Activated CD4-positive, alpha-beta memory T cell treated with anti-CD3 and anti-CD28 coated beads for 36 hours (primary cell): ENCODE measurements at regions of chr9 and their contacts with region 1.

Region 1: GRCh38 chr9:128026773-128027541 is 40.2 kb downstream of the NAIF1 start:
- DNase-seq: peak; percentile 75
- H3K4me3 Mint-ChIP-seq: peak overlapping the region; percentile 66
- H3K27ac Mint-ChIP-seq: peak overlapping the region; percentile 93
- H3K4me1 Mint-ChIP-seq: peaks cover 89% of the 10 kb centered on the region
- H3K27me3 Mint-ChIP-seq: peaks cover 2% of the 10 kb centered on the region

Region 2: GRCh38 chr9:127779136-127779981 is 247.6 kb before region 1 on chr9:
- CTCF ChIA-PET with region 1: no interaction called
- POLR2A ChIA-PET with region 1: no interaction called
- intact Hi-C with region 1: loop called (anchors 2 kb)
- DNase-seq: peak; percentile 85
- H3K4me3 Mint-ChIP-seq: peak overlapping the region; percentile 99
- H3K27ac Mint-ChIP-seq: peak overlapping the region; percentile 98
- H3K4me1 Mint-ChIP-seq: peaks cover 59% of the 10 kb centered on the region
- H3K27me3 Mint-ChIP-seq: no peaks in the 10 kb centered on the region

Region 3: DNA sequence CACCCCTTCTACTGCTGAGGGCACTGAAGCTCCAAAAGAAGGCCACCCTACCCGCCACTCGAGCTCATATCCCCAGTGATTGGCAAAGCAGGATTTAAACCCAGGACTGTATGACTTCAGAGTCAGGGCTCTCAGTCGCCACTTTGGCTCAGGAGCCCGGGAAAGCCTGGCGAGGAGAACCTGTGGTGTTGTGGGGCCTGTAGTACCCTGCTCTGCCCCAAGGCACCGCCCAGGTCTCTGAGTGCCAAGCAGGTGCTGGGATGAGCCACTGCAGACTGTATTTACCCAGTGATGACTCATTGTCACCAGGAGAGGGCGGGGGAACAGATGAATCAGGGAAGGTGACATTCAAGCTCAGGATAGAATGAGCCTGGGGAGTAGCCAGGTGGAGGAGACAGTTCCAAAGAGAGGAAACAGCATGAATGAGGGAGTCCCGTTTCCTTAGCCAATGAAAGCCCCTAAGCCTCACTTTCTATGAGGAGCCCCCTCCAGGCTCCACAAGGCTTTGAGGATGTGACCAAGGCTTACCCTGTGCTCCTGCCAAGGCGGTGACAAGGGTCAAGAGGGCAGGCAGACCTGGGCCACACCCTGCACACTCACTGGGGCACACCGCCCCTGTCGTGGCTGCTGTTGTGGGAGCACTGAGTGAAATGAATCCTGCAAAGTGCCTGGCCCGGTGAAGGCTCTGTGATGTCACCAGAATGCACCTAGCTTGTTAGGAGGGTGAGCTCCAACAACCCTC is 71.5 kb before region 1 on chr9:
- CTCF ChIA-PET with region 1: interaction called, 27 read pairs
- POLR2A ChIA-PET with region 1: interaction called, 4 read pairs
- intact Hi-C with region 1: loop called (anchors 1 kb)
- DNase-seq: peak; percentile 95
- H3K4me3 Mint-ChIP-seq: peak overlapping the region; percentile 30
- H3K27ac Mint-ChIP-seq: peak overlapping the region; percentile 92
- H3K4me1 Mint-ChIP-seq: peaks cover 80% of the 10 kb centered on the region
- H3K27me3 Mint-ChIP-seq: no peaks in the 10 kb centered on the region

Region 4: DNA sequence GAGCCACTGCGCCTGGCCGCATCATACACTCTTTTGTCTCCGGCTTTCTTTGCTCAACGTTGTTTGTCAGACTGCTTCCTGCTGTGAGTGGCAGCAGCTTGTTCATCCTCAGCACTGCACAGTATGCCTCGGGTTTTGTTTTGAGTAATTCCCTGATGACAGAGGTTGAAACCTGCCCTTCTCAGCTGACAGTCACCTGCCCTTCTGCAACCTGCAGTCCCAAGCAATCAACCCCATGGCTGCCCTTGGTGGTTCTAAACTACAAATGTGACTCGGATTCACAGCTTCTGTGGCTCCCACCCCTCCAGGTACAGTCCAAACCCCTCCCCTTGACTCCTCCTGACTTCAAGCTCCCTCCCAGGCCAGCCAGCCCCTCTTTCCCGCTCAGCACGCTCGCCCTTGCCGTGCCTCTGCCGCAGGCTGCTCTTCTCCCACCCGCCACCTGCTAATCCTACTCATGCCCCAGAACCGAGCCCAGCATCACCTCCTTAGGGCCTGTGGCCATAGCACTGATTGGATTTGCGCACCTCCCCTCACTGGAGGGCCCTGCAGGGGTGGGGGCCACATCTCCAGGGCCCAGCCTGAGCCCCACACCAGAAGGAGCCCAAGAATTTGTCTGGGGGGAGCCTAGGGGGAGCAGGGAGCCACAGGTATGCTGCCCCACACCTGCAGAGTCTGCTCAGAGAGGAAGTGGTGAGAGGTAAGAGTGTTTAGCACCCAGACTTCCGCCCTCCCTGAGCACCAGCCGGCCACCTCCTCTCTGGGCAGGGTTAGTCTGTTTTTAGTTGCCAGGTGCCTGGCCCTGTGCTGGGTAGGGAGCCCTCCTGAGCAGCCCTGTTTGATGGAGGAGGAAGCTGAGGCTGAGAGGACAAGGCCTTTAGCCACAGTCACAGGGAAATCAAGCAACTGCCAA is 56.3 kb before region 1 on chr9:
- CTCF ChIA-PET with region 1: interaction called, 4 read pairs
- POLR2A ChIA-PET with region 1: interaction called, 45 read pairs
- intact Hi-C with region 1: loop called (anchors 1 kb)
- DNase-seq: peak; percentile 89
- H3K4me3 Mint-ChIP-seq: peak overlapping the region; percentile 62
- H3K27ac Mint-ChIP-seq: peak overlapping the region; percentile 88
- H3K4me1 Mint-ChIP-seq: peaks cover 97% of the 10 kb centered on the region
- H3K27me3 Mint-ChIP-seq: no peaks in the 10 kb centered on the region

Region 5: DNA sequence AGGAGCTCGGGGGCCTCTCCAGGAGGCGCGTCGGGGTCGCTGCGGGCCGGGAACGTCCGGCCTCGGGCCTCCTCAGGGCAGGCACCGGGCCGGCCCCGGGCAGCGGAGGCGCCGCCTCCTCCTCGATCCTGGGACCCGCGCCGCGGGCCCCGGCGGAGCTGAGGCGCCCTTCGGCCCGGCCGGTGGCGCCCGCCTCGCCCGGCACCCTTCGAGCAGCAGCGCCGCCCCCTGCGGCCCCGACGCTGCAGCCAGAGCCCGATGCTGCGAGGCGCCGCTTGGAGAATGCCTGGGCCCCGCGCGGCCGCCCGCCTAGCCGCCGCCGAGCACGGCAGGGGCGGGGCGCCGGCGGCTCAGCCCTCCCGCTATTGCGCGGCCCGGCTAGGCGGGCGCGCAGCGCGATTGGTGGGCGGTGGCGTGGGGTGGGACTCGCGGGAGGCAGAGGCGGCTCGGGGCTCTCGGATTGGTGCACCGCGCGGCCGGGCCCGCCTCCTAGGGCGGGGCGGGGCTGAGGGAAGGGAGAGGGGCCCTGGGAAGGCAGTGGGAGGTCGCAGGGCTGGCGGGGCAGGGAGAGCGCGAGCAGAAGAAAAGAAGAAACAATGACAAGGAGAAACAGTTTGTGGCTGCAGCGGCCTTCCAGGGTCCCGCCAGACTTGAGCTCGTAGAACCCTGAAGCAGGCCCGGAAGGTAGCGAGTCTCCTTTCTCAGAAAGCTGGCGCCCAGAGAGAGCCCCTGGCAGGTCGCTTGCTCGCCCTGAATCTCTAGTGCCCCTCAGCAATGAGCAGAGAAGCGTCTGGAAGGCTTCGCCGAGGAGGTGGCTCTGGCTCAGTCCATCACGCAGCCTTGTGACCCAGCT is 46.0 kb before region 1 on chr9 and contains the start of gene EEIG1:
- CTCF ChIA-PET with region 1: interaction called, 25 read pairs
- POLR2A ChIA-PET with region 1: interaction called, 45 read pairs
- intact Hi-C with region 1: loop called (anchors 1 kb)
- DNase-seq: peak; percentile 98
- H3K4me3 Mint-ChIP-seq: peak within 1 kb of the TSS; percentile 96
- H3K27ac Mint-ChIP-seq: peak within 1 kb of the TSS; percentile 93
- H3K4me1 Mint-ChIP-seq: peaks cover 43% of the 10 kb centered on the region
- H3K27me3 Mint-ChIP-seq: no peaks in the 10 kb centered on the region
- total RNA-seq, gene EEIG1: 50.7 to 58.0 TPM

Region 6: GRCh38 chr9:128007566-128008138 is 19.3 kb before region 1 on chr9:
- CTCF ChIA-PET with region 1: interaction called, 5 read pairs
- POLR2A ChIA-PET with region 1: interaction called, 4 read pairs
- intact Hi-C with region 1: loop called (anchors 1 kb)
- DNase-seq: peak; percentile 94
- H3K4me3 Mint-ChIP-seq: peak overlapping the region; percentile 80
- H3K27ac Mint-ChIP-seq: peak overlapping the region; percentile 92
- H3K4me1 Mint-ChIP-seq: peaks cover 43% of the 10 kb centered on the region
- H3K27me3 Mint-ChIP-seq: no peaks in the 10 kb centered on the region

Region 7: DNA sequence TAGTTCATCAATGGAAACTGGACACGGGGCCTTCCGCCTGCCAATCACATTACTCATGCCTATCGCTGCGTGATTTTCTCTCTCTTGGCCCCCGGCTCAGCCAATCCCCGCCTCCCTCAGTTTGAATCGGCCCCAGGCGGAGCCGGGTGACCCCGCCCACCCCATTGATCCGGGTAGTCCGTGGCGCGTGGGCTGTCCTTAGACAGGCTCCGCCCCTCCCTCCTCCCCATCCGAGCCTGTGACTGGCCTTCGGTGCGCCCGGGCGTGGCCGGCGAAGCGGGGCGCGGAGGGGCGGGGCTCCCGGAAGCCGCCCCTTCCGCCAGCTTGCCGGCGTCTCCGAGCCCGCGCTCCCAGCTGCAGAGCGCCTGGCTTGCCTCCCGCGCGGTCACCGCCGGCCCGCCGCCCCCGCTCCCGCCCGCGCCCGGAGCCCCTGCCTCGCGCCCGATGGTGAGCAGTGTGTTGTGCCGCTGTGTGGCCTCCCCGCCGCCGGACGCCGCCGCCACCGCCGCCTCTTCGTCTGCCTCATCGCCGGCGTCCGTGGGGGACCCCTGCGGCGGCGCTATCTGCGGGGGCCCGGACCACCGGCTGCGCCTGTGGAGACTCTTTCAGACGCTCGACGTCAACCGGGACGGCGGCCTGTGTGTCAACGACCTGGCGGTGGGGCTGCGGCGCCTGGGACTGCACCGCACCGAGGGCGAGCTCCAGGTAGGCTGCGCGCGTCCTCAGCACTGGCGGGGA is 41.1 kb after region 1 on chr9 and contains the start of gene SLC25A25:
- CTCF ChIA-PET with region 1: interaction called, 5 read pairs
- POLR2A ChIA-PET with region 1: interaction called, 5 read pairs
- intact Hi-C with region 1: loop called (anchors 1 kb)
- DNase-seq: peak; percentile 100
- H3K4me3 Mint-ChIP-seq: peak within 1 kb of the TSS; percentile 96
- H3K27ac Mint-ChIP-seq: peak within 1 kb of the TSS; percentile 91
- H3K4me1 Mint-ChIP-seq: peaks cover 49% of the 10 kb centered on the region
- H3K27me3 Mint-ChIP-seq: no peaks in the 10 kb centered on the region
- total RNA-seq, gene SLC25A25: 17.1 to 17.3 TPM

Region 8: GRCh38 chr9:128322404-128323211 is 295.7 kb after region 1 on chr9 and contains the starts of genes COQ4 and TRUB2:
- CTCF ChIA-PET with region 1: no interaction called
- POLR2A ChIA-PET with region 1: no interaction called
- intact Hi-C with region 1: no loop called
- DNase-seq: peak; percentile 95
- H3K4me3 Mint-ChIP-seq: peak within 1 kb of the TSS; percentile 85
- H3K27ac Mint-ChIP-seq: peak within 1 kb of the TSS; percentile 94
- H3K4me1 Mint-ChIP-seq: peaks cover 17% of the 10 kb centered on the region
- H3K27me3 Mint-ChIP-seq: no peaks in the 10 kb centered on the region
- total RNA-seq, gene COQ4: 33.0 to 35.5 TPM
- total RNA-seq, gene TRUB2: 27.2 to 27.4 TPM